Endothelial cell of umbilical vein (primary cell): ENCODE measurements at regions of chr15 and their contacts with region 1.

Region 1: DNA sequence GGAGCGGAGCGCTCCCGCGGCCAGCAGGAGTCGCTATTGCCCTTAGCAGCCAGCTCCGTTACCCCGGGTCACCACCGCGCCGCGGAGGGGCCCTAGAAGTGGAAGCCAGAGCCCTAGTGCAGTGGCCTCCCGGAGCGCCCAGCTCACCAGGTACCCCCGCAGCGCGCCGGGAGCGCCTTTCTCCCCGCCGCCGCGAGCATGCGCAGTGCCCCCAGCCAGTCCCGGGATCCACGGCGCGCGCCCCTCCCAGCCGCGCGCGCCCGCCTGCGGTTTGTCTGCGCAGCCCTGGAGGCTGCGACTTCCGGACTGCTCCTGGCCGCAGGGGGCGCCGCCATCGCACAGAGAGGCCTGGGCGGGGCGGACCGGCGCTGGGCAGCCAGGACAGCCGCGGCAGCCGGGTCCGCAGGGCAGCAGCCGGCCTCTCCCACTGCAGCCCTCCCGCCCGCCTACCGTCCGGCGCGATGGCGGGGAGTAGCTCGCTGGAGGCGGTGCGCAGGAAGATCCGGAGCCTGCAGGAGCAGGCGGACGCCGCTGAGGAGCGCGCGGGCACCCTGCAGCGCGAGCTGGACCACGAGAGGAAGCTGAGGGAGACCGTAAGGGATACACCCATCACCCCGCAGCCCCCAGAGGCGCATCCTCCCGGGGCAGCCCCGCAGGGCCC is 5.7 kb downstream of the TPM1 start:
- DNase-seq: peak; percentile 94
- H3K4me3 ChIP-seq: peak overlapping the region; percentile 72 to 87 (median 78)
- H3K27ac ChIP-seq: peak overlapping the region; percentile 68
- H3K4me1 ChIP-seq: peaks cover 81% of the 10 kb centered on the region
- H3K27me3 ChIP-seq: no peaks in the 10 kb centered on the region
- CTCF ChIP-seq: peak; percentile 92 to 95
- POLR2A ChIP-seq: peak; percentile 66

Region 2: DNA sequence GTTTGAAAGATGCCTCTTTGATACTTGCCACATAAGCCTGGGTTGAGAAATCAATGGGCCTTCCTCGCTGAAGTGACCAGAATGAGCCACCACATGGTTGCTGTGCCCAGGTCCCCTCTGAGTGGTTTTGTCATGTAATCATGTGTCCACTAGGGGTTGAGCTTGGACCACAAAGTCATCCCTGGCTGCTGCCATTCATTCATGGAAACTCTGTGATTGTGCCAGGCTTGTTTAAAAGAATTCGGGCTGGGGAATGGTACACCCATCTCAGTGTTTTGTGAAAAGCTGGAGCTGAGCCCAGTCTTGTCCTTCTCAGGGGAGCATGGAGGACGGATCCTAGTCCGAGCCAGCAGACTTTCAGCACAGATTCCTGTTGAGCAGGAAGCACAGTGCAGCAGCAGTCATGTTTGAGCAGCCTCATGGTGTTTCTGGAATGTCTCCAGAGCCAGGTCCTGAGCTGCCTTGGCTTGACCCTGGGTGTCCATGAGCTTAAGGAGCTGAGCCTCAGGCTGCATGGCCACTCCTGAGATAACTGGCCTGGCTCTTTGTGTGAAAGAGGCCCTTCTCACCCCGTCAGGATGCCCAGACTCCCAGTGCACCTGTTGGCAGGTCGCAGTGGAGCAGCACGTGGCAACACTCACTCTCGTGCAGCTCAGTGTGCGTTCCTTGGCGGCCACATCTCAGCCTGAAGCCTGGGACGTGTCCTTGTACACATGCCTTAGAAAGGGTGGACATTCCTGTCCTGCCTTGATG is 266.0 kb before region 1 on chr15:
- CTCF ChIA-PET with region 1: interaction called, 48 read pairs
- POLR2A ChIA-PET with region 1: interaction called, 9 read pairs
- dilution Hi-C with region 1: no loop called
- intact Hi-C with region 1: loop called (anchors 1 kb)
- DNase-seq: peak; percentile 90
- H3K4me3 ChIP-seq: no peak overlapping the region
- H3K27ac ChIP-seq: no peak overlapping the region
- H3K4me1 ChIP-seq: peaks cover 8% of the 10 kb centered on the region
- H3K27me3 ChIP-seq: no peaks in the 10 kb centered on the region
- CTCF ChIP-seq: peak; percentile 73 to 77
- POLR2A ChIP-seq: no peak

Region 3: GRCh38 chr15:62976301-62976881 is 71.9 kb before region 1 on chr15:
- CTCF ChIA-PET with region 1: no interaction called
- POLR2A ChIA-PET with region 1: no interaction called
- dilution Hi-C with region 1: no loop called
- intact Hi-C with region 1: no loop called
- DNase-seq: no peak
- H3K4me3 ChIP-seq: no peak overlapping the region
- H3K27ac ChIP-seq: no peak overlapping the region
- H3K4me1 ChIP-seq: no peaks in the 10 kb centered on the region
- H3K27me3 ChIP-seq: no peaks in the 10 kb centered on the region
- CTCF ChIP-seq: no peak
- POLR2A ChIP-seq: no peak

Region 4: GRCh38 chr15:62988701-62989100 is 59.5 kb before region 1 on chr15:
- CTCF ChIA-PET with region 1: no interaction called
- POLR2A ChIA-PET with region 1: no interaction called
- dilution Hi-C with region 1: no loop called
- intact Hi-C with region 1: no loop called
- DNase-seq: no peak
- H3K4me3 ChIP-seq: no peak overlapping the region
- H3K27ac ChIP-seq: no peak overlapping the region
- H3K4me1 ChIP-seq: no peaks in the 10 kb centered on the region
- H3K27me3 ChIP-seq: no peaks in the 10 kb centered on the region
- CTCF ChIP-seq: no peak
- POLR2A ChIP-seq: no peak

Region 5: DNA sequence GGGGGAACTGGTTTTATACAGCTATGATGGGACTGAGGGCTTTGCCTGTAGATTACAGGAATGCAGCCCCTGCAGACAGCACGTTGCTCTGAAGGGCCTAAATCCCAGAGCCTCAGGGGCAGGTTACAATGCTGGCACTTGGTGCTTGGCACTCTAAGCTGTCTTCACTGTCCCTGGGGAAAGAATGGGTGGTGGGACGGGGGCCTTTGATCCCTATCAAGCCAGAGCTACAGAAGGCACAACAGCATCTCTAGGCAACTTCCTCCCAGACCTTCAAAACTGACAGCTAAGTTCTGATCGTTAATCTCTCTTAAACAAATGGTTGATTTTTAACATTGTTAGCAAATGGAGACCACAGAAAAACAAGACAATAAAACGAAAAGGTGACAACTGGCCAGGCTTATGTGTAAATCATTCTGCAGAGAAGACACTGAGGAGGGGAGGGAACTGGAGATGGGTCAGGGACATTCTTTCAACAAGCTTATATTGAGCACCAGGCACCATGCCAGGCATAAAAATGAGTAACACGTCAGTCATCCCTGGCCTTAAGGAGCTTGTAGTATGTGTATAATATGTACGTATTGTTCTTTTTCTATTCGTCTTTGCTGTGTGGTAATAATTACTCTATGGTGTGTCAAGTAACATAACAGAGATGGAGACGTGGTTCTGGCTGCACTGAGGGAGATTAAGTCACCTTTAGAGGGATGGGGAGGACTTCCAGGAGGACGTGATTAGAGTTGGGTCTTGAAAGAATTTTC is 284.3 kb after region 1 on chr15:
- CTCF ChIA-PET with region 1: no interaction called
- POLR2A ChIA-PET with region 1: no interaction called
- dilution Hi-C with region 1: no loop called
- intact Hi-C with region 1: no loop called
- DNase-seq: peak; percentile 83
- H3K4me3 ChIP-seq: no peak overlapping the region
- H3K27ac ChIP-seq: no peak overlapping the region
- H3K4me1 ChIP-seq: peaks cover 10% of the 10 kb centered on the region
- H3K27me3 ChIP-seq: no peaks in the 10 kb centered on the region
- CTCF ChIP-seq: no peak
- POLR2A ChIP-seq: no peak

Region 6: GRCh38 chr15:63411866-63412265 is 363.6 kb after region 1 on chr15:
- CTCF ChIA-PET with region 1: no interaction called
- POLR2A ChIA-PET with region 1: no interaction called
- dilution Hi-C with region 1: no loop called
- intact Hi-C with region 1: no loop called
- DNase-seq: no peak
- H3K4me3 ChIP-seq: no peak overlapping the region
- H3K27ac ChIP-seq: no peak overlapping the region
- H3K4me1 ChIP-seq: peaks cover 12% of the 10 kb centered on the region
- H3K27me3 ChIP-seq: peaks cover 0 to 4% of the 10 kb centered on the region in 2 experiments
- CTCF ChIP-seq: no peak
- POLR2A ChIP-seq: no peak